ENCODE measurements at regions of chr19 and their contacts with region 1.

Region 1: GRCh38 chr19:38647368-38647965 is at the start of gene ACTN4:
- DNase-seq: peak; percentile 99 to 100 (median 100)
- ATAC-seq: peak; percentile 92
- H3K4me3 ChIP-seq: peak within 1 kb of the TSS; percentile 96
- H3K4me3 Mint-ChIP-seq: peak within 1 kb of the TSS; percentile 85
- H3K27ac ChIP-seq: peak within 1 kb of the TSS; percentile 21 to 41
- H3K27ac Mint-ChIP-seq: peak within 1 kb of the TSS; percentile 75
- H3K4me1 ChIP-seq: peaks cover 50% of the 10 kb centered on the region
- H3K4me1 Mint-ChIP-seq: peaks cover 37% of the 10 kb centered on the region
- H3K27me3 ChIP-seq: peaks cover 3 to 9% of the 10 kb centered on the region in 2 experiments
- H3K27me3 Mint-ChIP-seq: peaks cover 37% of the 10 kb centered on the region
- CTCF ChIP-seq: no peak
- total RNA-seq, gene ACTN4: 70.3 to 84.0 TPM

Region 2: DNA sequence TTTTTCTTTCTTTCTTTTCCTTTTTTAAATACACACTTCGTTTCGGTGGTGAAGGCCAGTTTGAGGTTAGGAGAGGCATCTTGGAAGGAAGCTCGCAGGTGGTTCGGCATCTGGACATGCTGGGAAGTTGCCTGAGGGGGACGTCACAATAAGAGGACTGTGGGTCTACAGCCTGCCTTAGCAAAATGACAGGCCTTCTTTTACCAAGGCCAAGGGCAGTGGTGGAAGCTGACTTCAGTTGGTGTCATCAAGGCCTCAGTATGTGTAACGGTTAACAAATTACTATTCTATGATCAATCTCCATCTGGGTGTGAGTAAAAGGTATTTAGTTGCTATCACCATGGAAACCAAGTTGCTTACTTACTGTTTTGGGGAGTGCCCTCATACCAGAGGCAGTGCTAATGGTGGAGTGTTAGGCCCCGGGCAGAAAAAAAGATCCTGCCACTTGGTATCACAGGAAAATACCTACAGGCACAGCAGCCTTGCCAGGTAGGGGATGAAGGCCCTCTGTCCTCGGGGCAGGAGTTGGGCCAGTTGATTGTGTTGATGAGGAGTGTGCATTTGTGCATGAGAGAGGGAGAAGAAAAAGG is 10.3 kb after region 1 on chr19:
- CTCF ChIA-PET with region 1: no interaction called
- POLR2A ChIA-PET with region 1: interaction called, 27 read pairs
- intact Hi-C with region 1: loop called in 1 of 2 experiments (anchors 1 kb)
- DNase-seq: peak in 3 of 14 experiments; percentile 22 to 65 (median 64)
- ATAC-seq: peak; percentile 30
- H3K4me3 ChIP-seq: no peak overlapping the region
- H3K4me3 Mint-ChIP-seq: peak overlapping the region; percentile 42
- H3K27ac ChIP-seq: peak overlapping the region in 1 of 2 donors; percentile 33
- H3K27ac Mint-ChIP-seq: peak overlapping the region; percentile 39
- H3K4me1 ChIP-seq: peaks cover 69% of the 10 kb centered on the region
- H3K4me1 Mint-ChIP-seq: peaks cover 60% of the 10 kb centered on the region
- H3K27me3 ChIP-seq: peaks cover 0 to 12% of the 10 kb centered on the region in 2 experiments
- H3K27me3 Mint-ChIP-seq: peaks cover 69% of the 10 kb centered on the region
- CTCF ChIP-seq: no peak

Region 3: DNA sequence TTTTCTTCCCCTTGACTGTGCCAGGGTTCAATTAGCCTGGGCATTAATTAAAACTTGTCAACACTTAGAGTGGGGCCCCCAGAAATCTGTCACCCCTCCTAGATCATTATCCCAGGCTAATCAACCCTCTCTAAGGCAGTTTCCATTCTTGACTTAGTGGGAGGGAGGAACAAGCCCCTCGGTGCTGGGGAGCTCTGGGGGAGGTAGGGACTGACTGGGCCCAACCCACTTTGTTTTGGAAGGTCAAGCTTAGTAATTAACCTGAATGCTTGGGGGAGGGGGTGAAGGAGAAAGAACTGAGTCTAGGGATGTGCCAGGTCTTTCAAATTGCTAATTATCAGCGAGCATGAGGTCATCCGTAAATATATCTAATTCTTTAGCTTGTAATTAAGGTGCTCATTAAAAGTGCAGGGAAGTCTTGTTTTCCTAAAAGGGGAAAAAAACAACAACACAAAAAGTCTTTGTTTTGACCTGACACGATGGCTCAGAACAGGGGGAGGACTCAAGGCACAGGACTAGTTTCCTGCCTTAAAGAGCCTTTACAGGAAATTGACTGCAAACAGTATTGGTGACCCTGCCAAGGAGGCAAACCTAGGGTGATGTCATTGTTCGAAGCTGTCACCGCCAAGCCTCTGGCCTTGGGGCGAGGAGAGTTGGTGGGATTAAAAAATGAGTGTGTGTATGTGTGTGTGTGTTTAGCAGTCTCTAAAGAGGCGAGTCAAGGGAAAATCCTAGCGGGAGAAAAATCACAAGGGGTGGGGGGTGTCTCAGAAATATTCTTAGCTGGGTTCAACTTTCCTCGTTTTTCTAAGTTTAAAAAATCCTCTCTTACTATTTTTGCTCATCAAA is 19.4 kb after region 1 on chr19:
- CTCF ChIA-PET with region 1: no interaction called
- POLR2A ChIA-PET with region 1: interaction called, 9 read pairs
- intact Hi-C with region 1: loop called in 1 of 2 experiments (anchors 2 kb)
- DNase-seq: peak in 6 of 14 experiments; percentile 25 to 77 (median 55)
- ATAC-seq: peak; percentile 66
- H3K4me3 ChIP-seq: no peak overlapping the region
- H3K4me3 Mint-ChIP-seq: peak overlapping the region; percentile 52
- H3K27ac ChIP-seq: peak overlapping the region in 1 of 2 donors; percentile 2
- H3K27ac Mint-ChIP-seq: peak overlapping the region; percentile 59
- H3K4me1 ChIP-seq: peaks cover 93% of the 10 kb centered on the region
- H3K4me1 Mint-ChIP-seq: peaks cover 83% of the 10 kb centered on the region
- H3K27me3 ChIP-seq: peaks cover 0 to 3% of the 10 kb centered on the region in 2 experiments
- H3K27me3 Mint-ChIP-seq: peaks cover 29% of the 10 kb centered on the region
- CTCF ChIP-seq: no peak

Measured in CD4-positive, alpha-beta T cell (primary cell).